ENCODE measurements at regions of chr12 and their contacts with region 1.

Region 1: DNA sequence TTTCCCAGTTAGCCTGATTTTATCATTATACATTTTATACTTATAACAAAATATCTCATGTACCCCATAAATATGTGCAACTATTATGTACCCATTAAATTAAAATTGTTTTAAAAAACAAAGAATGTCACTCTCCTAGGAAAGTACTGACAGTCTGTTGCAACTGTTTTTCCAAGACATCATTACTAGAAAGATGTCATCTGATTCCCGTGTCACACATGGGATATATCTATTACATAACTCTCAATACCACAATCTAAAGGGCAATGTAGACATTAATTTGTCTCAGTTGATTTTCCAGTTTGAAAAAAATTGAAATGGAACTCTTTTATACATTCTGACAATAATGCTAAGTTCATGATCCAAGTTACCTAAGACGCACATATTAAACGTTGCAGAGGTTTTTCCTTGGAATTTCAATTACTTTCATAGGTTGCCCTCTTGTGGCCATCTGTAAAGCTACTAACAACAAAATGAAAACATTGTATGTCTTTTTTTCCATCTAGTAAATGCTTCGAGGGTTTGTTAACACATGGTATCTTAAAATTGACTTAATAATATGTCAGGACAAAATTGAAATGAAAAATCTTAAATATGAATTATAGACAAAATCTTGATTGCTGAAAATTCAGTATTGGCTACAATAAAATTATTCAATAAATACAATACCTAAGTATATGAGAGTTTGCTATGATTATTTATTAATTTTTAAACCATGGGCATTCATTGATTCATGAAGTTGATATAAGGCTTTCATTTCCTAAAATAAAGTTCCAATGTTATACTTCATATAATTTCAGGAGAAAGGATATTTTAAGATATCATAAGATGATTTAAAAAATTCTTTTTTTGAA is 131.6 kb downstream of the PPFIA2 start:
- DNase-seq: no peak
- H3K4me3 ChIP-seq: no peak overlapping the region
- H3K27ac ChIP-seq: no peak overlapping the region
- H3K4me1 ChIP-seq: no peaks in the 10 kb centered on the region
- H3K27me3 ChIP-seq: no peaks in the 10 kb centered on the region
- CTCF ChIP-seq: peak; percentile 39

Region 2: GRCh38 chr12:81450920-81451739 is 176.4 kb before region 1 on chr12:
- intact Hi-C with region 1: loop called (anchors 5 kb)
- DNase-seq: peak; percentile 32
- H3K4me3 ChIP-seq: no peak overlapping the region
- H3K27ac ChIP-seq: no peak overlapping the region
- H3K4me1 ChIP-seq: no peaks in the 10 kb centered on the region
- H3K27me3 ChIP-seq: no peaks in the 10 kb centered on the region
- CTCF ChIP-seq: peak; percentile 48

Region 3: GRCh38 chr12:81668475-81668874 is 40.9 kb after region 1 on chr12:
- intact Hi-C with region 1: no loop called
- DNase-seq: no peak
- H3K4me3 ChIP-seq: no peak overlapping the region
- H3K27ac ChIP-seq: no peak overlapping the region
- H3K4me1 ChIP-seq: no peaks in the 10 kb centered on the region
- H3K27me3 ChIP-seq: no peaks in the 10 kb centered on the region
- CTCF ChIP-seq: no peak